ENCODE measurements at regions of chr17 and their contacts with region 1.

Region 1: DNA sequence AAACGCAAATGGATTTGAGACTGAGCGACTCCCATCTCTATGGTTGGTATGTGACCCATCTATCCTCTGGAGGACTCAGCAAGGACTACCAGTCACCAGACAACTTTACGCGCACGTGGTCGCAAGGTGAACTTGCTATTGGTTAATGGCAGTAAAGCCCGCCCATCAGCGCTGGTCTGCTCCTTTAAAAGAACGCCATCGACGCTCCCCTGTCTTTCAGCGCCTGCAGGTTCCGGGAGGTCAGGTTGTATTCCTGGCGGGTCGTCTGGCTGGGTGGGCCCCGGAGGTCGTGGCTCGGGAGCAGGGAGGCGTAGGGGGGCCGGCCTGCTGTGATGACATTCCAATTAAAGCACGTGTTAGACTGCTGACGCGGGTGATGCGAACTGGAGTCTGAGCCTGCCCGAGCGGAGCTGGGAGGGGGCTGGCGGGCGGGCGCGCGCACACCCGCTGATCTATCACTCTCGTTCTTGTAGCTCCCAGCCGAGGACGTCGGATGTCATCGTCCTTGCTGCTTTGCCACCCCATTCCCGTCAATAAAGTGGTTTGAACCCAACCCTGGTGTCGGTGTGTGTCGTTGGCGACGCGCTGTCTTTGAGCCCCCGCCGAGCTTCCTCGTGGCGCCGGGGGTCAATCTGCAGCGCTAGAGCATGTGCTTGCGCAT is 15.9 kb upstream of the ERN1 start:
- DNase-seq: peak; percentile 97
- CTCF ChIP-seq: no peak

Region 2: DNA sequence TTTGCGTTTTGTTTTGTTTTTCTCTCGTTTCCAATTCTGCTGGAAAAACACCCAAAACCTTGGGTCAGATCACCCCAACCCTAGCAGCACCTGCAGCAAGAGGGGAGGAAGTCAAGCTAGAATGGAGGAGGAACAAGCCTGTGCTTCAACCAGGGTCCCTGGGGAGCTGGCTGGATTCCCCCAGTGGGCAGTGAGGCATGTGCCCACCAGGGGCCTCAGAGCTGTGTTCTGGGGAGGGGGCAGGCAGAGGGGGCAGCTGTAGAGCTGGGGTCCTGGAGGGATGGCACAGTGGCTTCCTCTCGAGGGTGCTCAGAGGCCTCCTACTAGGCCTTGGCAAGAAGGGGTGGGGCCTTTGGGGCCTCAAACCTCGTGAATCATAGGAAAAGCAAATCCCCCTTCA is 220.2 kb before region 1 on chr17:
- in situ Hi-C with region 1: no loop called
- DNase-seq: peak; percentile 41
- CTCF ChIP-seq: no peak

Region 3: GRCh38 chr17:64020056-64020766 is 125.7 kb before region 1 on chr17 and contains the start of gene ICAM2:
- in situ Hi-C with region 1: loop called (anchors 5 kb)
- DNase-seq: peak; percentile 74
- CTCF ChIP-seq: no peak